Dendritic cell treated with granulocyte-macrophage colony-stimulating factor and Interleukin-4, amounts not matched to agents 40 ng/mL and 50 ng/mL, for 4 days (primary cell): ENCODE measurements at regions of chr3 and their contacts with region 1.

Region 1: DNA sequence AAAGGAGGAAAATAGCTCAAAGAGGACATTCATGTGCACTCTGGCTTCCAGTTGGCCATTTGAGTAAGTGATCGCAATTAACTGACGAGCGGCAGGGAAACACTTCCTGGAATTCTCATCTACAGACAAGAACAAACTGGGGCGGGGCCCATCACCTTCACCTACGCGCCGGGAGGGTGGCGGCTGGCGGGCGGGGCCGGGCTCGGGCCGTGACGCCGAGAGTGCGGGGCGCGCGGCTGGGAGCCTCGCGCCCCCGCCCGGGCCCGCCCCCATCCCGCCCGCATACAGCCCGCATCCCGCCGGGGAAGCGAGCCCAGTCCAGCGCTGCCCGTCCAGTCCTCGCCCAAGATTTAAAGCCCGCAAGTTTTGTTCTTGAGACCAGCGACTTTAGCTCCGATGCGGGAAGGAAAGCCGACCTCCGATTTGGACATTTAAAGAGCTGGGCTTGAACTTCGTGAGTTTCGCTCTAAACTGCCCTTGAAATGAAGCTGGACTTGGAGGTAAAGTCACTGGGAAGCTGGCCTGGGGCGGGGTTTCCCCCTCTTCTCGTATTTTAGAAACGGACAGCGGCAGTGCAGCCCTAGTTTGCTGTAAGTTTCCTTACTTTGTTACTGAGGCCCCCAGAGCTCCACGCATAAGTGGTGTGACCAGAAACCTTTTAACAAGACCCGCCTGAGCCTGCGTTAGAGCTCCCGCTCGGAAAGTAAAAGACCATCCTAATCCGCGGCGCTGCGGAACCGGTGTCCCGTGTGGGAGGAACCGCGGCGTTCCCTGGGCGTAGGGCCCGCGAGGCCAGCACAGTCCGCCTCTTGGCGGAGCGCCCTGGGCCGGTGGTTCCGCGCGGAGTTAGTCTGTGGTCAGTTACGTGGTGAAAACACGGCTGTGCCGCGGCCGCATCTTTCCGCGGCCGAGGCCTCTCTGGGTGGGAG is at the start of gene B3GNT5:
- H3K4me3 Mint-ChIP-seq: peak within 1 kb of the TSS; percentile 90
- H3K27ac Mint-ChIP-seq: peak within 1 kb of the TSS; percentile 99
- H3K4me1 Mint-ChIP-seq: peaks cover 45% of the 10 kb centered on the region
- H3K27me3 Mint-ChIP-seq: no peaks in the 10 kb centered on the region

Region 2: GRCh38 chr3:183122257-183122932 is 130.8 kb before region 1 on chr3:
- intact Hi-C with region 1: loop called (anchors 5 kb)
- H3K4me3 Mint-ChIP-seq: no peak overlapping the region
- H3K27ac Mint-ChIP-seq: no peak overlapping the region
- H3K4me1 Mint-ChIP-seq: peaks cover 7% of the 10 kb centered on the region
- H3K27me3 Mint-ChIP-seq: peaks cover 20% of the 10 kb centered on the region

Region 3: DNA sequence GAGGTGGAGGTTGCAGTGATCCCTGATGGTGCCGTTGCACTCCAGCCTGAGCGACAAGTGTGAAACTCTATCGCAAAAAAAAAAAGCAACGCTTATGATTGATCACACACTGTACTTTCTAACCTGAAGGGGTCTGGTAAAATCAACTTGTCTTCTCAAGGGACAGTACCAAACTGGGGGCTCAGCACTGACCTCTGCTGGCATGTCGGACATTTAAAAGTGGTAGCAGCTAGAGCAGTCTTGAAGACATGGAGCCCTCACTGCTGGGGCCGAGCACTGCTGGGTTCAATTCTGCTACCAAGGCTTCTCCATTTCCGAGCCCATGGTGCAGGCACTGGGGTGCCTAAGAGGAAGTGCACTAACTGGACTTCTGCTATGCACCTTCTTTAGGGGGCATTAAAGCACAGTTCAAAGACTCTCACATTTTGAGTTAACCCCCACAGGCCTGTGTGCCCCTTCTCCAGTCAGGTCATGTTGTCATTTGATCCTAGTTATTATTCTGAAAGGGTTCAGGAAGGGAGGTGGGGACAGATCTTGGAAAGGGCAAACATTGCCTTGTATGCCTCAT is 64.3 kb before region 1 on chr3:
- intact Hi-C with region 1: loop called (anchors 5 kb)
- H3K4me3 Mint-ChIP-seq: no peak overlapping the region
- H3K27ac Mint-ChIP-seq: peak overlapping the region; percentile 59
- H3K4me1 Mint-ChIP-seq: peaks cover 46% of the 10 kb centered on the region
- H3K27me3 Mint-ChIP-seq: no peaks in the 10 kb centered on the region

Region 4: GRCh38 chr3:183210839-183211341 is 42.3 kb before region 1 on chr3:
- intact Hi-C with region 1: loop called (anchors 2 kb)
- H3K4me3 Mint-ChIP-seq: peak overlapping the region; percentile 32
- H3K27ac Mint-ChIP-seq: peak overlapping the region; percentile 93
- H3K4me1 Mint-ChIP-seq: peaks cover 69% of the 10 kb centered on the region
- H3K27me3 Mint-ChIP-seq: no peaks in the 10 kb centered on the region

Region 5: DNA sequence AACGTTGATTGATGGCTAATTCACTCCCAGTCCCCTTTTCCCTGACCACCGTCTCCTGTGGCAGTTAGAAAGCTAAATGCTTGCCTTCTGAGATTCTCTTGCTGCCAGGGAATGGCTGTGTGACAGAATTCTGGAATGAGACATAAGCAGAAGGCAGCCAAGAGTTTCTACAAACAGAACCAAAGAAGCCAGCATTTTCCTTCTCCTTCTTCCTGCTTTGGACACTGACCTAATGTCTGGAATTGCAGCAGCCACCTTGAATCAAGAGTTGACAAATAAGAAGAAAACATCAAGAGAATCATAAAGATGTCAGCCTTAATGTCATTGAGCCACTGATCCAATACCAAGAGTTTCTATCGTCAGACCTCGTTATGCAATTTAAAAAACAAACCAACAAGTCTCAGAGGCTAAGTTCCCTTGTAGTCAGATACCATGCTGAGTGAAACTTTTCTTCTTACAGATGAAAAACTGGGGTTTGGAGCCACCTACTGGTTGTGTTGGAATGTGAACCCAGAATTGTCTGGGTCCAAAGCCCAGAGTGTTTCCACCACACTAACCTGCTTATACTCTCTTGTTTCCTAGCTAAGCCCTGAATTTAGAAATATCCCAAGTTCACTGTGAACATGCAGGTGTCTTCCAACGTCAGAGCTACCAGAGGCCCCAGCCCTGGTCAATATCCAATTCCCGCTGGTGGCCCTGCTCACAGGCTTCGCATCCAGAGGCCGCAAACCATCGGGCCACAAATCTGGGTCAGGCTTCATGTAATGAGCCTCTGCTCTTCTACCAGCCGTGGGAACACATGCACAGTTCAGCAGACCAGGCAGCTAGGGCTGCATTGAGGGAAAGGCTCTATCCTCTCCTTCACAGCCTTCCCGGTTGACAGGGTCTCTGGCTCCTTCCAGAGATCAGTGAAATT is 132.7 kb after region 1 on chr3:
- intact Hi-C with region 1: loop called (anchors 2 kb)
- H3K4me3 Mint-ChIP-seq: no peak overlapping the region
- H3K27ac Mint-ChIP-seq: peak overlapping the region; percentile 39
- H3K4me1 Mint-ChIP-seq: peaks cover 17% of the 10 kb centered on the region
- H3K27me3 Mint-ChIP-seq: no peaks in the 10 kb centered on the region